Activated T-helper 2 cell treated with anti-CD3 and anti-CD28 coated beads, Interferon-gamma antibody, Interleukin-2, Interleukin-4, amounts not matched to agents 10 μg/mL and 5 μg/mL and 100 μg/mL, durations not matched to agents 14 hours and 24 hours and 36 hours (primary cell): ENCODE measurements at regions of chr1 and their contacts with region 1.

Region 1: GRCh38 chr1:98078596-98078995 is 157.8 kb upstream of the DPYD start:
- DNase-seq: no peak
- H3K4me3 Mint-ChIP-seq: no peak overlapping the region
- H3K27ac Mint-ChIP-seq: no peak overlapping the region
- H3K4me1 Mint-ChIP-seq: peaks cover 4% of the 10 kb centered on the region
- H3K27me3 Mint-ChIP-seq: no peaks in the 10 kb centered on the region

Region 2: GRCh38 chr1:97277891-97278654 is 800.5 kb before region 1 on chr1:
- intact Hi-C with region 1: loop called (anchors 10 kb)
- DNase-seq: no peak
- H3K4me3 Mint-ChIP-seq: no peak overlapping the region
- H3K27ac Mint-ChIP-seq: no peak overlapping the region
- H3K4me1 Mint-ChIP-seq: peaks cover 8% of the 10 kb centered on the region
- H3K27me3 Mint-ChIP-seq: no peaks in the 10 kb centered on the region

Region 3: DNA sequence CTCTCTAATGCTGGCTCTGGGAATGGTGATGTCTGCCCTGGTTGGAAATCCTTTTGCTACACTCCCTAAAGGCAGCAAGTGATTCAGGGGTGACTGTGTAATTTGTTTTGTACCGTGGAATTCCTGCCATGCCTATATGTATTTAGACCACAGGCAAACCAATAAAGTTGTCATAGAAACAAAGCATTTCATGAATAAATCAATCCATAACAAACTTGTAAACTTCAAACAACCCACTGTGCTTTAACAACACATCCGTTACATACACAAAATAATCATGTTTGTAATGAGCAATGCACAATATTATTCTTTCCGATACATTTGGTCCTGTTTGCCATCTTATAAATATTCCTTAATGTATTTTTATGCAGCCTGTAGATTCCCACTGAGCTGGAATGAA is 252.6 kb after region 1 on chr1:
- intact Hi-C with region 1: no loop called
- DNase-seq: no peak
- H3K4me3 Mint-ChIP-seq: no peak overlapping the region
- H3K27ac Mint-ChIP-seq: no peak overlapping the region
- H3K4me1 Mint-ChIP-seq: no peaks in the 10 kb centered on the region
- H3K27me3 Mint-ChIP-seq: peaks cover 11% of the 10 kb centered on the region